Heart left ventricle (tissue), 16 donors: ENCODE measurements at regions of chr17 and their contacts with region 1.

Region 1: GRCh38 chr17:44210342-44211192 is 8.9 kb downstream of the UBTF start:
- DNase-seq: peak; percentile 88 to 95 (median 90)
- ATAC-seq: peak; percentile 85 to 94 (median 92)
- H3K4me3 ChIP-seq: peak overlapping the region in 4 of 12 donors; percentile 5 to 33 (median 13)
- H3K27ac ChIP-seq: peak overlapping the region in 10 of 12 donors; percentile 30 to 73 (median 51)
- H3K4me1 ChIP-seq: peaks cover 3 to 22% (median 12%) of the 10 kb centered on the region in 12 donors
- H3K27me3 ChIP-seq: no peaks in the 10 kb centered on the region
- CTCF ChIP-seq: peak; percentile 97 to 100 (median 99)
- POLR2A ChIP-seq: peak in 1 of 2 donors; percentile 40

Region 2: DNA sequence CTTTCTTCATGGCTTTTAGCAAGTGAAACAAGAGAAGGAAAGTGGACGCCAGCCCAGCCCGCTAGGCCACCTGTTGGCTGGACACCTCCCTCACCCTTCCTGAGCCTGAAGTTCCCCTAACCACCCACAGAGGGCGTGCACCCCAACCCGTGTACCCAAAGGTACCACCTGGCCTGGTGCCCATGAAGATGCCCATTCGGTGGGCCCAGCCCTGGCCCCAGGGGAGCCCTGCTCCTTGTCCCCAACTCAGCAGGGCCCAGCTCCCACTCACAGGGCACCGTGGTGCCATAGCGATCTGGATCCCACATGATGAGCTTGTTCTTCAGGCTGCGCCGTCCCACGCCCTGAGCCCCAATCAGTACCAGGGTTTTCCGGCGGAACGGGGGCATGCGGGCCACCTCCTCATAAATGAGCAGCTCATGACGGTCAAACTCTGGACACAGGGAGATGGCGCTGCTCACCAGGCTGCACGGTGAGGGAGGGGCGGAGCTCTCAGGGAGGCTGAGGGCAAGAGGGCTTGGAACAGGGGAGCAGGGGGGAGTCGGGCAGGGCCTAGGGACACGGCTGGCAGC is 330.1 kb before region 1 on chr17:
- intact Hi-C with region 1: no loop called
- DNase-seq: peak in 1 of 5 donors; percentile 63
- ATAC-seq: no peak
- H3K4me3 ChIP-seq: no peak overlapping the region
- H3K27ac ChIP-seq: no peak overlapping the region
- H3K4me1 ChIP-seq: peaks cover 0 to 22% (median 4%) of the 10 kb centered on the region in 12 donors
- H3K27me3 ChIP-seq: no peaks in the 10 kb centered on the region
- CTCF ChIP-seq: peak; percentile 39 to 64 (median 54)
- POLR2A ChIP-seq: no peak

Region 3: DNA sequence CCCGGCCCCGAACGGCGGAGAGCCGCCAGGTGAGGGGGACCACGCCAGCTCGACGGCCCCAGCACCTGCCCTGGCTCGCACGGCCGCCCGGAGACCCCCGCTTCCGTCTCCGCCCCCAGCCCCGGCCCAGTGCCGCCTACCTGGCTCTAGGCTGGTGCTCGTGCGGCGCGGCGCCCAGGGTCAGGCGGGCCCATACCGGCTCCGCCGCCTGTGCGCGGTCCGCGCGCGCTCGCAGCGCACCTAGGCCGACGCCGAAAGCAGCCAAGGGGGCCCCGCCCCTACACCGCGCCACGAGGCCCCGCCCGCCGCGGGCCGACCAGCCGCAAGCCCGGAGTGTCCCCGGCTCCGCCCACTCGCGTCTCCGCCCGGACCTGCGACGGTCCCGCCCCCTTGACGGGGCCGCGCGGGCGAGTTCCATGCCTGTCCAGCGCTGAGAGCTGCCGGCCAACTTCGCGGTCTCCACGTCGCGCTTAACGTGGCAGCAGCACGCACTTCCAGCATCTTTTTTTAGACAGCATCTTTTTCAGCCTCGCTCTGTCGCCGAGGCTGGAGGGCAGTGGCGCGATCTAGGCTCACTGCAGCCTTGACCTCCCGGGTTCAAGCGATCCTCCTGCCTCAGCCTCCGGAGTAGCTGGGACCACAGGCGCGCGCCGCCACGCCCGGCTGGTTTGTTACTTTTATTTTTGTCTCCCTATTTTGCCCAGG is 114.2 kb after region 1 on chr17 and contains the start of gene SLC25A39:
- intact Hi-C with region 1: loop called in 2 of 10 experiments (anchors 2 to 5 kb)
- DNase-seq: peak; percentile 95 to 99 (median 97)
- ATAC-seq: peak; percentile 86 to 92 (median 90)
- H3K4me3 ChIP-seq: peak within 1 kb of the TSS; percentile 82 to 99 (median 94)
- H3K27ac ChIP-seq: peak within 1 kb of the TSS; percentile 58 to 98 (median 95)
- H3K4me1 ChIP-seq: peaks cover 5 to 38% (median 22%) of the 10 kb centered on the region in 12 donors
- H3K27me3 ChIP-seq: no peaks in the 10 kb centered on the region
- CTCF ChIP-seq: no peak
- POLR2A ChIP-seq: peak in 1 of 2 donors; percentile 81
- total RNA-seq, gene SLC25A39: 37.2 to 78.5 (median 49.7) TPM

Region 4: DNA sequence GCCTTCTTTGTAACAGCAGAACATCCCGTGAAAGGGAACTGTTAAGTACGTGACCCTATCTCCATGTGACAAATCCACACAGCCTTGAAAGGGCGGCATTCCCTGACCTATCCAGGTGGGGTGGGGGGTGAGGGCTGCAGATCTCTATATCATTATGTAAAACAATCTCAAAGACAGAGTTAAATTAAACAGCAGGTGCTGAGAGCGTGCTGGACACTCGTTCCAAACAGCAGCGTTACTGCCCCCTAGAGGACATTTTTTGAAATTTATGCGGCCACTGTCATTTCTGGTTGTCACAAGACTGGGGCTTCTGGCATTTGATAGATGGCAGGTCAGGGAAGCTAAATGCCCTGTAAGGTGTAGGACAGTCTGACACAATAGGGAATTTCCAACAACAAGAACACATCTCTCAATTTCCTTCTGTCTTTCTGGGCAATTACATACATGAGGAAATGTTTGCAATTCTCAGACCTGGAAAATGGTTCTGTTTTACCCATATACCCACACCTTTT is 120.7 kb after region 1 on chr17:
- intact Hi-C with region 1: loop called in 8 of 10 experiments (anchors 1 to 5 kb)
- DNase-seq: peak; percentile 57 to 76 (median 66)
- ATAC-seq: peak in 3 of 4 donors; percentile 20 to 48 (median 27)
- H3K4me3 ChIP-seq: no peak overlapping the region
- H3K27ac ChIP-seq: peak overlapping the region in 2 of 12 donors; percentile 10 to 12
- H3K4me1 ChIP-seq: peaks cover 0 to 49% (median 4%) of the 10 kb centered on the region in 12 donors
- H3K27me3 ChIP-seq: no peaks in the 10 kb centered on the region
- CTCF ChIP-seq: peak; percentile 76 to 88 (median 82)
- POLR2A ChIP-seq: no peak

Region 5: GRCh38 chr17:44344939-44345453 is 134.4 kb after region 1 on chr17 and contains the start of gene GRN:
- intact Hi-C with region 1: loop called in 2 of 10 experiments (anchors 5 kb)
- DNase-seq: peak; percentile 93 to 95 (median 94)
- ATAC-seq: peak; percentile 98 to 99 (median 98)
- H3K4me3 ChIP-seq: peak within 1 kb of the TSS; percentile 43 to 99 (median 80)
- H3K27ac ChIP-seq: peak within 1 kb of the TSS; percentile 34 to 97 (median 83)
- H3K4me1 ChIP-seq: peaks cover 0 to 49% (median 12%) of the 10 kb centered on the region in 12 donors
- H3K27me3 ChIP-seq: no peaks in the 10 kb centered on the region
- CTCF ChIP-seq: no peak
- POLR2A ChIP-seq: peak in 1 of 2 donors; percentile 87
- total RNA-seq, gene GRN: 94.8 to 451 (median 196) TPM